Endothelial cell of umbilical vein (primary cell): ENCODE measurements at regions of chr15 and their contacts with region 1.

Region 1: DNA sequence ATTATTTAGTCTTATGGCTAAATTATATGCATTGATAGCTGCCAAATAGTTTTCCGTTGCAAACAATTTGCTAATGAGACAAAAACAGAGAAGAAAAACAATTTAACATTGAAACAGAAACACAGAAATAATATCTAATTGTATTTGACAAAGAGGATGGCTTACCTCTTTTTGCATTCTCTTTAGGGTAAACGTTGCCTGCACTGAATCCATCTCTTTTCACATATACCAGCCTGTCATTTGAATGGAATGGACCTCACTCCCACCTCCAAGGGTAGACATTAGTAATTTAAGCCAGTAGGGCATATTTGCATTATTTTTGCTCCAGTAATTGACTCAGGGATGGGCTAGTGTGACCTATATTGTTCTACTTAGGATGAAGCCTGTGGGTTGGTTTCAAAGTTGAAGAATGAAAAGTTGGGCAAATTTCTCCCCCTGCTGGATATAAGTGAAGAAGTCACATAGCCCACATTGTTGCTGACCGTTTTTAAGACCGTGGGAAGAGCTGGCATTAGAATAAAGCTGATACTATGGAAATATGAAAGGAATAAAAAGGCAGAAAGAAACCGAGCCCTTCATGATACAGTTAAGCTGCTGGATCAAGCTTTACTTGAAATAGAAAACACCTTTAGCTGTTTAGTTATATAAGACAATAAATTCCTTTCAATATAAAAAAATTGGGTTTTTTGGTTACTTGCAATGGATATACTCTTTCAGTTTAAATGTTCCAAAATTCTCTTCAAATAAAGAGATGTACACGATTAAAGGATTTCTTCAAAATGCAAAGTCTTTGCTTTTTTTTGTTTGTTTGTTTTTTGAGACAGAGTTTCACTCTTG is 26.9 kb downstream of the PIERCE2 start:
- DNase-seq: peak; percentile 83
- H3K4me3 ChIP-seq: no peak overlapping the region
- H3K27ac ChIP-seq: no peak overlapping the region
- H3K4me1 ChIP-seq: no peaks in the 10 kb centered on the region
- H3K27me3 ChIP-seq: no peaks in the 10 kb centered on the region
- CTCF ChIP-seq: peak; percentile 47 to 59
- POLR2A ChIP-seq: no peak

Region 2: DNA sequence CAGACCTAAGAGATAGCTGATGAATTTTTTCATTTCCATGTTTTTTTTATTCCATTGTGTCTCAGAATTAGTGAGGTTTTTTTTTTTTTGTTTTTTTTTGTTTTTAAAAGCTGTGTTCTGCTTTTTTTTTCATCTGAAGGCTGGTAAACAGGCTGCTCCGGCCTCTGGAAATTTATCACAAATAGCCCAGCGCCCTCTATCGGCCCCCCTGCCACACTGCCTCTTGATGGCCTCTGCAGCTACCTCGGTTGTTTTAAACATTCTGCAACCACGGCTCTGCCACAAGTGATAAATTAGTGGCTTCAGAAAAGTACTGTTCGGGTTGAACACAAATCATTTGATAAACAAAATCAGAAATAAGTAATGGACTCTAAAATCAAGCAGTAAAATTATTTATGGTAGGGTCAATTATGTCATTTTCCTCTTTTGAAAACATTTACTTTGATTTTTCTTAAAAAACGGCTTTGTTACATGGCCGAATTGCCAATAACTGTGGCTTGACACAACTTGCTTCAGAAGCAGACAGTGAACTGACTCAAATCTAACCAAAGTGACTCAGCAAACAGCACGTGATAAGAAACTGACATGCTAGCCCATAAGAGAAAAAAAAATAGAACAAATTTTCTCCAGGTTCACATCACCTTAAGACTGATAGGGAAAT is 326.2 kb before region 1 on chr15:
- CTCF ChIA-PET with region 1: interaction called, 4 read pairs
- POLR2A ChIA-PET with region 1: no interaction called
- dilution Hi-C with region 1: no loop called
- intact Hi-C with region 1: loop called (anchors 5 kb)
- DNase-seq: peak; percentile 39
- H3K4me3 ChIP-seq: no peak overlapping the region
- H3K27ac ChIP-seq: no peak overlapping the region
- H3K4me1 ChIP-seq: no peaks in the 10 kb centered on the region
- H3K27me3 ChIP-seq: no peaks in the 10 kb centered on the region
- CTCF ChIP-seq: peak; percentile 83 to 85
- POLR2A ChIP-seq: no peak

Region 3: GRCh38 chr15:55221090-55222011 is 213.9 kb before region 1 on chr15:
- CTCF ChIA-PET with region 1: interaction called, 64 read pairs
- POLR2A ChIA-PET with region 1: no interaction called
- dilution Hi-C with region 1: no loop called
- intact Hi-C with region 1: loop called (anchors 1 kb)
- DNase-seq: peak; percentile 21
- H3K4me3 ChIP-seq: no peak overlapping the region
- H3K27ac ChIP-seq: peak overlapping the region; percentile 12
- H3K4me1 ChIP-seq: peaks cover 5% of the 10 kb centered on the region
- H3K27me3 ChIP-seq: no peaks in the 10 kb centered on the region
- CTCF ChIP-seq: no peak
- POLR2A ChIP-seq: no peak

Region 4: GRCh38 chr15:55318588-55319494 is 116.4 kb before region 1 on chr15 and contains the starts of genes PIGB and PIGBOS1:
- CTCF ChIA-PET with region 1: interaction called, 17 read pairs
- POLR2A ChIA-PET with region 1: no interaction called
- dilution Hi-C with region 1: no loop called
- intact Hi-C with region 1: loop called (anchors 1 kb)
- DNase-seq: peak; percentile 92
- H3K4me3 ChIP-seq: peak within 1 kb of the TSS; percentile 45 to 83 (median 77)
- H3K27ac ChIP-seq: peak within 1 kb of the TSS; percentile 74
- H3K4me1 ChIP-seq: peaks cover 9% of the 10 kb centered on the region
- H3K27me3 ChIP-seq: no peaks in the 10 kb centered on the region
- CTCF ChIP-seq: no peak
- POLR2A ChIP-seq: peak; percentile 77
- total RNA-seq, gene PIGB: 11.8 and 14.1 TPM in 2 replicates
- total RNA-seq, gene PIGBOS1: 12.8 and 15.1 TPM in 2 replicates

Region 5: GRCh38 chr15:55372701-55373440 is 62.3 kb before region 1 on chr15:
- CTCF ChIA-PET with region 1: interaction called, 12 read pairs
- POLR2A ChIA-PET with region 1: no interaction called
- dilution Hi-C with region 1: no loop called
- intact Hi-C with region 1: no loop called
- DNase-seq: peak; percentile 71
- H3K4me3 ChIP-seq: no peak overlapping the region
- H3K27ac ChIP-seq: peak overlapping the region; percentile 42
- H3K4me1 ChIP-seq: peaks cover 16% of the 10 kb centered on the region
- H3K27me3 ChIP-seq: no peaks in the 10 kb centered on the region
- CTCF ChIP-seq: no peak
- POLR2A ChIP-seq: no peak

Region 6: GRCh38 chr15:55420171-55420866 is 14.9 kb before region 1 on chr15:
- CTCF ChIA-PET with region 1: interaction called, 14 read pairs
- POLR2A ChIA-PET with region 1: no interaction called
- dilution Hi-C with region 1: no loop called
- intact Hi-C with region 1: no loop called
- DNase-seq: no peak
- H3K4me3 ChIP-seq: no peak overlapping the region
- H3K27ac ChIP-seq: no peak overlapping the region
- H3K4me1 ChIP-seq: no peaks in the 10 kb centered on the region
- H3K27me3 ChIP-seq: no peaks in the 10 kb centered on the region
- CTCF ChIP-seq: no peak
- POLR2A ChIP-seq: no peak

Region 7: GRCh38 chr15:55484917-55485672 is 49.9 kb after region 1 on chr15:
- CTCF ChIA-PET with region 1: interaction called, 10 read pairs
- POLR2A ChIA-PET with region 1: no interaction called
- dilution Hi-C with region 1: no loop called
- intact Hi-C with region 1: no loop called
- DNase-seq: no peak
- H3K4me3 ChIP-seq: no peak overlapping the region
- H3K27ac ChIP-seq: no peak overlapping the region
- H3K4me1 ChIP-seq: no peaks in the 10 kb centered on the region
- H3K27me3 ChIP-seq: no peaks in the 10 kb centered on the region
- CTCF ChIP-seq: no peak
- POLR2A ChIP-seq: no peak